ENCODE measurements at regions of chr12 and their contacts with region 1.

Region 1: GRCh38 chr12:103632554-103633216 is 45.6 kb downstream of the STAB2 start:
- H3K4me3 ChIP-seq: no peak overlapping the region
- H3K27ac ChIP-seq: no peak overlapping the region
- H3K4me1 ChIP-seq: no peaks in the 10 kb centered on the region
- CTCF ChIP-seq: peak; percentile 55; the same call in 1 of the 2 replicates

Region 2: DNA sequence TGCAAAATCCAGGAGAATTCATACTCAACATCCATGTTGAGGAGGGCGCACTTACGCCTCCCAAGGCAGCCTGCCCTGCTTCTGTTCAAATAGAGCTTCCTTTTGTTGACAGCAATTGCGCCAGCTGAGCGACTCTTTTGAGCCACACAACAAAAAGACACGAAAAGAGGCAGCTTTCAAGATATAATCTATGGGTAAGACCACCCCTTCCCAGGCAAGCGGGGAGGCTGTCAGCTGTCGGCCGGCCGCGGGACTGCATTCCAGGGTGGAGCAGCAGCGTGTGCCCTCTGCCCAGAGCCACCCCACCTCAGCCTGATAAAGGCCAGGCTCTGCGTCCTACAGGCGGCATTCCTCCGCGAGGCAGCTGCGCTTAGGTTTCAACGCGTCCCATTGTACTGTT is 61.4 kb before region 1 on chr12:
- CTCF ChIA-PET with region 1: interaction called, 49 read pairs
- POLR2A ChIA-PET with region 1: no interaction called
- H3K4me3 ChIP-seq: no peak overlapping the region
- H3K27ac ChIP-seq: no peak overlapping the region
- H3K4me1 ChIP-seq: no peaks in the 10 kb centered on the region
- CTCF ChIP-seq: no peak

Region 3: DNA sequence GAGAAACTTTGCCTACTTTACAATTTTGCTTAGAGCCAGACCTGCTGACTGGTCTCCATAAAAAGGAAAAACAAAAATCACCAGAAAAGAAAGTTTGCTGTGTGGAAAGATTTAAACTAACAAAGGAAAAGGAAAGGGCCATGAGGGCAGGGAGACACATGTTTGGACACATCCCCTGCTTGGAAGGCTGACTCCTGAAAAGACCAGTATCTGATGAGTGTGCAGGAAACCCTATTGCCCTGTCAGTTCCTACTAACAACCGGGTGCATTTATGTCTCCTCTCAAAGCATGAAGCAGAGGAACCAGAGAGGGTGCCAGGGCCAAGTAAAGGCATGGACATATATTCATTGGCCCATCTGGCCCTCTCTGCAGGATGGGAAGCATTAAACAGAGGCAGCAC is 52.7 kb before region 1 on chr12:
- CTCF ChIA-PET with region 1: interaction called, 49 read pairs
- POLR2A ChIA-PET with region 1: no interaction called
- H3K4me3 ChIP-seq: no peak overlapping the region
- H3K27ac ChIP-seq: no peak overlapping the region
- H3K4me1 ChIP-seq: no peaks in the 10 kb centered on the region
- CTCF ChIP-seq: no peak

Region 4: DNA sequence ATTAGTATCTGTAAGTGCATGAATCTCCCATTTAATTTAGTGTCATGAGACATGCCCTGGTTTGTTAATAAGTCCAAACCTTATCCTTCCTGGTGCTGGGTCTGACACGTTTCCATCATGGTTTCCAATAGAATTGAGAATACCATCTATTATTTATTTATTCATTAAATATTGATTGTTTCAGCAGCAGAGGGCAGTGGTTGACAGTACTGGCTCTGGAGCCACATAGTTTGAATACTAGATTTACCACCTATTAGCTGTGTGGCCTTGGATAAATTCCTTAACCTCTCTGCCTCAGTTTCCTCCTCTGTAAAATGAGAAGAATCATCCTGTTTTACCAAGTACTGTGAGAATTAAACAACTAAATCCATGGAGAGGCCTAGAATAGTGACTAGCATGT is 46.6 kb before region 1 on chr12:
- CTCF ChIA-PET with region 1: interaction called, 19 read pairs
- POLR2A ChIA-PET with region 1: no interaction called
- H3K4me3 ChIP-seq: no peak overlapping the region
- H3K27ac ChIP-seq: no peak overlapping the region
- H3K4me1 ChIP-seq: no peaks in the 10 kb centered on the region
- CTCF ChIP-seq: no peak

Region 5: GRCh38 chr12:103647267-103647666 is 14.6 kb after region 1 on chr12:
- CTCF ChIA-PET with region 1: interaction called, 42 read pairs
- POLR2A ChIA-PET with region 1: no interaction called
- H3K4me3 ChIP-seq: no peak overlapping the region
- H3K27ac ChIP-seq: no peak overlapping the region
- H3K4me1 ChIP-seq: no peaks in the 10 kb centered on the region
- CTCF ChIP-seq: no peak

Region 6: GRCh38 chr12:103667125-103667524 is 34.4 kb after region 1 on chr12:
- CTCF ChIA-PET with region 1: interaction called, 15 read pairs
- POLR2A ChIA-PET with region 1: no interaction called
- H3K4me3 ChIP-seq: no peak overlapping the region
- H3K27ac ChIP-seq: no peak overlapping the region
- H3K4me1 ChIP-seq: no peaks in the 10 kb centered on the region; the same call in 1 of the 2 replicates
- CTCF ChIP-seq: no peak

Region 7: GRCh38 chr12:103765322-103765721 is 132.6 kb after region 1 on chr12:
- CTCF ChIA-PET with region 1: no interaction called
- POLR2A ChIA-PET with region 1: no interaction called
- H3K4me3 ChIP-seq: no peak overlapping the region
- H3K27ac ChIP-seq: no peak overlapping the region
- H3K4me1 ChIP-seq: peaks cover 2% of the 10 kb centered on the region; the same call in 1 of the 2 replicates
- CTCF ChIP-seq: no peak

Region 8: DNA sequence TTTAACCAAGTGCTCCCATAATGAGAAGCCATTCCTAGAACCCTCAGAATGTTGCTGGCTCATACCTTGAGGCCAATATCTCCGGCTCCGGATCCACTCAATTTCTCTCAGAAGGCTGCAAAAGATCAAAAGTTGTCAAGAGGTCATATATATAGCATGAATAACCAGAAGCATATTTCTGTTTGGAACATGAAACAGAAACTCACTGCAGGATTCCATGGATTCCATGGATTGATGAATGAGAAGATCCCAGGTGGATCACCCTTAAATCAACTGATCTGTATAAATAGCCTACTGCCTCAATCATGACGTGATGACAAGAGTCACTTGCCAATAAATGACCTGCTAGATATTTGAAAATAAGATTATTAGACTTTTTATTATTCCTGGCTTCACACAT is 211.6 kb after region 1 on chr12:
- CTCF ChIA-PET with region 1: no interaction called
- POLR2A ChIA-PET with region 1: no interaction called
- H3K4me3 ChIP-seq: no peak overlapping the region
- H3K27ac ChIP-seq: no peak overlapping the region
- H3K4me1 ChIP-seq: peaks cover 3% of the 10 kb centered on the region; the same call in 1 of the 2 replicates
- CTCF ChIP-seq: no peak

Measured in HEK293 (cell line).